Mammary epithelial cell (primary cell): ENCODE measurements at regions of chr2 and their contacts with region 1.

Region 1: DNA sequence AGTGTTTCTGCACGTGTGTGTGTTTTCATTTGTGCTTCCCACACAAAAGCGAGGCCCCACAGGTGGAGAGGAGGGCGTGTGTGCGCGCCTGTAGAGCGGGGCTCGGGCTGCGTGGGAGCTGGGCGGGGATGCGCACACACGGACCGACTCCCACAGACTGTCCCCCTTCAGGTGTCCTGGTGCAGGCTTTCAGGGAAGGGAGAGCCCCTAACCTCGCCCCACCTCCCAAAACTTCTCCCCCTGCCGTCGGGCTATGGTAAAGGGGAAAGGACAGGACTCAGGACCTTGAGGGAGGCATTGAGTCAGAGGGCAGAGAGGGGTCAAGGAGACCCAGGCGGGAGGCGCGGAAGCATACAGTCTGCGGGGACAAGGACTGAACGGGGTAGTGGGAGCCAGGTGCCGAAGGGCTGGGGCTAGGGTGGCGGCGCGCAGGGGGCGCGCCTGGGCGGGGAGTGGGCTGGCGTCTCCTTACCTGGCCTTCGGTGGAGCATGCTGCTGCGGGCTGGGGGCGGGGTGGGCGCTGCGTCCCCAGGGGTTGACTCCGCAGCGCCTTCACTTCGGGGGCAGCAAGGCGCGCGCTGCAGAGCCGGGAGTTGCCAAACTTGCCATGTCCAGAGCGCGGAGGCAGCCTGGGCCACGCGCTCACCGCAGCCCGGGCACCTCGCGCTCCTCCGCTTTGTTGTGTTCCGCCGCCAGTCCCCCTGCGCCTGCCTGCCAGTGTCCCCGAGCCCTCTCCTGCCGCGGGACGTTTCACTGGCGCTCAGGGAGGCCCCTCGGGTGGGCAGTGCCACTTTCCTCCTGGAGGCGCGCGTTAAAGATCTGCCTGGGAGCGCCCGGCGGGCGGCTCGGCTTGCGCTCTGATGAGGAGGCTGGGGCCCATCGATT is 302.0 kb downstream of the NCKAP5 start:
- DNase-seq: peak; percentile 33
- H3K4me3 ChIP-seq: peak overlapping the region in 2 of 3 experiments; percentile 57
- H3K27ac ChIP-seq: no peak overlapping the region
- H3K4me1 ChIP-seq: peaks cover 13% of the 10 kb centered on the region
- H3K27me3 ChIP-seq: no peaks in the 10 kb centered on the region
- CTCF ChIP-seq: peak in 1 of 2 donors; percentile 25

Region 2: DNA sequence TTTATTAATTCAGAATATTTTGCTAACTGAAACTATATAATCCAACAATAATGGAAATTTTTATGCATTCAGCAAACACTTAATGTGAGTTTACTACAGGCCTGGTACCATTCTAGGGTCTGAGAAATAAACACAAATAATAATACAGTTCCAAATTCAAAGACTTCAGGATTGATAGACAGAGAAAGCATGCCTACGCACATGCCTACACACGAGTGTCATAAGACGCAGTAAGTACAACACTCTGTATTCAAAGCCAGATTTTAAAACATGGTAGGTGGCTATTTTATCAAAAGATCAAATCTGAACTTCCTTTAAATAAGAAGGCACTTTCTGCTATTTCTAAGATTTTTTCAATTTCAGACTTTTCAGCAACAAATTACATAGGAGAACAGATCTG is 44.9 kb before region 1 on chr2:
- CTCF ChIA-PET with region 1: no interaction called
- dilution Hi-C with region 1: no loop called
- in situ Hi-C with region 1: no loop called
- intact Hi-C with region 1: no loop called
- DNase-seq: no peak
- H3K4me3 ChIP-seq: no peak overlapping the region
- H3K27ac ChIP-seq: no peak overlapping the region
- H3K4me1 ChIP-seq: no peaks in the 10 kb centered on the region
- H3K27me3 ChIP-seq: no peaks in the 10 kb centered on the region
- CTCF ChIP-seq: no peak

Region 3: GRCh38 chr2:133247631-133248030 is 18.7 kb before region 1 on chr2:
- CTCF ChIA-PET with region 1: no interaction called
- dilution Hi-C with region 1: no loop called
- in situ Hi-C with region 1: no loop called
- intact Hi-C with region 1: loop called (anchors 2 kb)
- DNase-seq: no peak
- H3K4me3 ChIP-seq: no peak overlapping the region
- H3K27ac ChIP-seq: no peak overlapping the region
- H3K4me1 ChIP-seq: no peaks in the 10 kb centered on the region
- H3K27me3 ChIP-seq: no peaks in the 10 kb centered on the region
- CTCF ChIP-seq: no peak

Region 4: GRCh38 chr2:133780099-133780839 is 514.0 kb after region 1 on chr2:
- CTCF ChIA-PET with region 1: interaction called, 14 read pairs
- dilution Hi-C with region 1: no loop called
- in situ Hi-C with region 1: no loop called
- intact Hi-C with region 1: loop called (anchors 1 kb)
- DNase-seq: peak; percentile 70
- H3K4me3 ChIP-seq: no peak overlapping the region
- H3K27ac ChIP-seq: no peak overlapping the region
- H3K4me1 ChIP-seq: no peaks in the 10 kb centered on the region
- H3K27me3 ChIP-seq: no peaks in the 10 kb centered on the region
- CTCF ChIP-seq: peak; percentile 81

Region 5: GRCh38 chr2:133829450-133830065 is 563.3 kb after region 1 on chr2:
- CTCF ChIA-PET with region 1: interaction called, 11 read pairs
- dilution Hi-C with region 1: no loop called
- in situ Hi-C with region 1: no loop called
- intact Hi-C with region 1: no loop called
- DNase-seq: no peak
- H3K4me3 ChIP-seq: no peak overlapping the region
- H3K27ac ChIP-seq: no peak overlapping the region
- H3K4me1 ChIP-seq: no peaks in the 10 kb centered on the region
- H3K27me3 ChIP-seq: no peaks in the 10 kb centered on the region
- CTCF ChIP-seq: no peak